ENCODE measurements at regions of chr7 and their contacts with region 1.

Region 1: DNA sequence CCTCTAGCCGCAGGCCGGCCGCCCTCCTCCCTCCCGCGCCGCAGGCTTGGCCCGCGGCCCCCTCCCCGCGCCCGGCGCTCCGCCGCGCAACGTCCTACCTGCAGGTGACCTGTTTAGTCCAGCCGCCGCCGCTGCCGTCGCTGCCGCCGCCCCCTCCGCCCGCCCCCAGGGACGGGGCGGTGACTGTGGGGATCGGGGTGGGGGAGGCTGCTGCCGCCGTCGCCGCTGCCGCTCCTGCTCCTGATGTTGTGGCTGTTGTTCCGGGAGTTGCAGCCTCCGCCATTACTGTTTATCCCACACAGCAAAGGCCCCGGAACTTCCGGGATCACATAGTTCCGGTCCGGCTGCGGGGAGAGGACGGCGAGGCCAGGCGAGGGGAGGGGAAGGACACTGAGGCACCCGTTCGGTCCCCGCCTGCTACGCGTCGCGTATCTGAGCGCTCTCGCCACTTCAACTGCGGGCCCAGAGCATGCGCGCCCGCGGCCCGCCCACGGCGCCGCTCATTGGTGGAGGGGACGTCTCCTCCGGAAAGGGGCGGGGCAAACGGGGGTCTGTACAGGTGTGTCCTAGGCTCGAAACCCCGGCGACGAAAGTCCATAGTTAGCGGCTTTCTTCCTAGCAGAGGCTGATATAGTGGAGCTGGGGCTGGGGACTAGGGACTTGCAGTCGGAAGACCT is at the start of gene MKRN1:
- DNase-seq: peak; percentile 94
- H3K4me3 Mint-ChIP-seq: peak within 1 kb of the TSS; percentile 95
- H3K27ac Mint-ChIP-seq: peak within 1 kb of the TSS; percentile 91
- H3K4me1 Mint-ChIP-seq: peaks cover 29% of the 10 kb centered on the region
- H3K27me3 Mint-ChIP-seq: no peaks in the 10 kb centered on the region
- total RNA-seq, gene MKRN1: 77.6 to 78.6 TPM

Region 2: GRCh38 chr7:139095194-139095659 is 1384.0 kb before region 1 on chr7:
- CTCF ChIA-PET with region 1: no interaction called
- intact Hi-C with region 1: loop called (anchors 5 kb)
- DNase-seq: peak; percentile 84
- H3K4me3 Mint-ChIP-seq: peak overlapping the region; percentile 70
- H3K27ac Mint-ChIP-seq: peak overlapping the region; percentile 95
- H3K4me1 Mint-ChIP-seq: peaks cover 90% of the 10 kb centered on the region
- H3K27me3 Mint-ChIP-seq: no peaks in the 10 kb centered on the region

Region 3: GRCh38 chr7:139915864-139916716 is 563.1 kb before region 1 on chr7:
- CTCF ChIA-PET with region 1: no interaction called
- intact Hi-C with region 1: loop called (anchors 1 kb)
- DNase-seq: peak; percentile 87
- H3K4me3 Mint-ChIP-seq: no peak overlapping the region
- H3K27ac Mint-ChIP-seq: peak overlapping the region; percentile 19
- H3K4me1 Mint-ChIP-seq: peaks cover 24% of the 10 kb centered on the region
- H3K27me3 Mint-ChIP-seq: peaks cover 2% of the 10 kb centered on the region

Region 4: DNA sequence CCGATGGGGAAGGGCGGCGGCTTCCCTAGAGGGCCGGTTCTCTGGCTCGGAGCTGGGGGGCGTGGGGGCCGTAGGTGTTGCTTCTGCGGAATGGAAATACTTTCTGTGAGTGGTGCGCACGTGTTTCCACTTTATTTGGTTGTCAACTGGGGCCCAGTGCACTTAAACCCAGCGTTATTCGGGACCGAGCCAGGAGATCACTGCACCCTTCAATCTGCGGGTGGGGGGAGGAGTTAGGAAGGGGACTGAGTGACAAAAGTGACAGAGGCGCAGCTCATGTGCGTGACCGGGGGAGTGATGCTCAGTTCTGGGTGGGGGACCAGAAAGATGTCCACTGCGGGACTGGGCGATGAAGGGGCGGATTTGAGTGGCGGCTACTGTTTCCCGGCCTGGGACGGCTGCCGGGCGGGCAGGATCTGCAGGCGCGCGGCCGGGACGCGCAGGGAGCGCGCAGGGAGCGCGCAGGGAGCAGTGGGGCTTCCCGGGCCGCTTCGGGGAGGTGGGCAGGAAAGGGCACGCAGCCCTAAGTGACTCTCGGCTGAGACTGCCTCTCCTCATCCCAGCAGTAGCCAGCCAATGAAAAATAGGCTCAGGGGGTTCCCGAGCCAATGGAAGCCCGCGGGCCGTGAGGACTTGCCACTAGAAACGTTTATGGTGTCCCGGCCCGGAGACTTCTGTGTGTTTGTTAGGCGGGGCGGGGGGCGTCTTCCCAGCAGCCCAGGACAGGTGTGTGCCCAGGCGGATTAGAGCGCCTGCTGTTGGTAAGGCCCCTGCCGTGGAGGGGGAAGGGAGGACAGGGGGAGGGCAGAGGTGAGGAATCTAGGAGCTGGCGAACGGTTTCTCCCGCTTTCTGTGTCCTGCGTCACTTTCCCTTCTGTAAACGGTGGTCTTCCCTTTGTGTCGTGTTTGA is 248.1 kb before region 1 on chr7:
- CTCF ChIA-PET with region 1: no interaction called
- intact Hi-C with region 1: loop called (anchors 2 kb)
- DNase-seq: peak; percentile 85
- H3K4me3 Mint-ChIP-seq: peak overlapping the region; percentile 97
- H3K27ac Mint-ChIP-seq: peak overlapping the region; percentile 98
- H3K4me1 Mint-ChIP-seq: peaks cover 38% of the 10 kb centered on the region
- H3K27me3 Mint-ChIP-seq: no peaks in the 10 kb centered on the region

Region 5: GRCh38 chr7:140249036-140249806 is 230.0 kb before region 1 on chr7:
- CTCF ChIA-PET with region 1: no interaction called
- intact Hi-C with region 1: no loop called
- DNase-seq: no peak
- H3K4me3 Mint-ChIP-seq: no peak overlapping the region
- H3K27ac Mint-ChIP-seq: no peak overlapping the region
- H3K4me1 Mint-ChIP-seq: peaks cover 12% of the 10 kb centered on the region
- H3K27me3 Mint-ChIP-seq: no peaks in the 10 kb centered on the region

Region 6: GRCh38 chr7:140403878-140404564 is 75.2 kb before region 1 on chr7 and contains the start of gene RAB19:
- CTCF ChIA-PET with region 1: no interaction called
- intact Hi-C with region 1: loop called (anchors 1 kb)
- DNase-seq: peak; percentile 67
- H3K4me3 Mint-ChIP-seq: peak within 1 kb of the TSS; percentile 82
- H3K27ac Mint-ChIP-seq: peak within 1 kb of the TSS; percentile 86
- H3K4me1 Mint-ChIP-seq: peaks cover 27% of the 10 kb centered on the region
- H3K27me3 Mint-ChIP-seq: no peaks in the 10 kb centered on the region
- total RNA-seq, gene RAB19: 4.6 to 5.2 TPM

Region 7: GRCh38 chr7:140673063-140673773 is 194.0 kb after region 1 on chr7:
- CTCF ChIA-PET with region 1: no interaction called
- intact Hi-C with region 1: loop called (anchors 1 kb)
- DNase-seq: peak; percentile 54
- H3K4me3 Mint-ChIP-seq: peak overlapping the region; percentile 83
- H3K27ac Mint-ChIP-seq: peak overlapping the region; percentile 66
- H3K4me1 Mint-ChIP-seq: peaks cover 39% of the 10 kb centered on the region
- H3K27me3 Mint-ChIP-seq: no peaks in the 10 kb centered on the region

Region 8: GRCh38 chr7:140924019-140924820 is 445.0 kb after region 1 on chr7:
- CTCF ChIA-PET with region 1: no interaction called
- intact Hi-C with region 1: loop called (anchors 1 kb)
- DNase-seq: peak; percentile 77
- H3K4me3 Mint-ChIP-seq: no peak overlapping the region
- H3K27ac Mint-ChIP-seq: no peak overlapping the region
- H3K4me1 Mint-ChIP-seq: peaks cover 10% of the 10 kb centered on the region
- H3K27me3 Mint-ChIP-seq: no peaks in the 10 kb centered on the region

Measured in activated naive CD4-positive, alpha-beta T cell treated with anti-CD3 and anti-CD28 coated beads for 36 hours (primary cell).